ENCODE measurements at regions of chr6 and their contacts with region 1.

Region 1: DNA sequence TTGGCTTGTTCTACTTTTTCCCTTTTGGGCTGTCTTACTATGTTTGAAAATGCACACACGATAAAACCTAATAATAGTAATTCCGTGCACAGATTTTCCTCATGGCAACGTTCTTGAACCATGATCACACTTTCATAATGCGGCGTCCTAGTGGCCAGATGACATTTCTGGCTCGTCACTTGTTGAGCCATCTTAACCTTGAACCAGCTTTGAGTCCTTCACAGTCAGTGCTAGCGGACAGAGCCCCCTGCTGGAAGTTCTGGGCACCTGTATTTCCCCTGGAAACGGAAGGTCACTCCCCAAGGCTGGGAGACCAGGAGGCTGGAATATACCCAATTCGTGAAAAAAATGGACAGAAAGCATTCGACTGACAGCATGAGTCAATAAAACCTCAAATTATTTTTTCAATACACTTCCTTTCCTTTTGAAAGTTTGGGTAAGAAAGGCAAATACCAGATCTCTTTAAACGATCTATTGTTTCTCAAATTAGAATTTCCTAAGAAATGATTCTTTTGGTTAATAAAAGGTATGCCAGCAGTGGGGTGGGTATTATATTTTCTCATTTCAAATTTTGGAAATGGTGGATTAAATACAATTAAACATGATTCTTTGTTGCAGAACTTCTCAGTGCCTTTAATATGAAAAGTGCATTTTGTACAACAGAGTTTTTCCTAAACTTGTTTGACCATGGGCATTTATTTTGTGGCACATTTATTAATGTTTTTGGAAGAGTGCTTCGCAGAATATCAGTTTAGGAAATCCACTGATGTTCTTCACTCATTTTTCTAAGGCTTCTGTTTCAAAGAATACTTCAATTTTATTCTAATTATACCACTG is 542.3 kb downstream of the QKI start:
- DNase-seq: peak; percentile 68
- H3K4me3 ChIP-seq: no peak overlapping the region
- H3K27ac ChIP-seq: no peak overlapping the region
- H3K4me1 ChIP-seq: peaks cover 4% of the 10 kb centered on the region
- H3K27me3 ChIP-seq: peaks cover 0 to 8% of the 10 kb centered on the region in 2 experiments
- CTCF ChIP-seq: peak; percentile 81 to 91
- POLR2A ChIP-seq: no peak

Region 2: GRCh38 chr6:162907876-162908481 is 1048.8 kb before region 1 on chr6:
- CTCF ChIA-PET with region 1: no interaction called
- POLR2A ChIA-PET with region 1: no interaction called
- dilution Hi-C with region 1: no loop called
- intact Hi-C with region 1: loop called (anchors 5 kb)
- DNase-seq: peak; percentile 22
- H3K4me3 ChIP-seq: no peak overlapping the region
- H3K27ac ChIP-seq: no peak overlapping the region
- H3K4me1 ChIP-seq: no peaks in the 10 kb centered on the region
- H3K27me3 ChIP-seq: no peaks in the 10 kb centered on the region
- CTCF ChIP-seq: no peak
- POLR2A ChIP-seq: no peak

Region 3: DNA sequence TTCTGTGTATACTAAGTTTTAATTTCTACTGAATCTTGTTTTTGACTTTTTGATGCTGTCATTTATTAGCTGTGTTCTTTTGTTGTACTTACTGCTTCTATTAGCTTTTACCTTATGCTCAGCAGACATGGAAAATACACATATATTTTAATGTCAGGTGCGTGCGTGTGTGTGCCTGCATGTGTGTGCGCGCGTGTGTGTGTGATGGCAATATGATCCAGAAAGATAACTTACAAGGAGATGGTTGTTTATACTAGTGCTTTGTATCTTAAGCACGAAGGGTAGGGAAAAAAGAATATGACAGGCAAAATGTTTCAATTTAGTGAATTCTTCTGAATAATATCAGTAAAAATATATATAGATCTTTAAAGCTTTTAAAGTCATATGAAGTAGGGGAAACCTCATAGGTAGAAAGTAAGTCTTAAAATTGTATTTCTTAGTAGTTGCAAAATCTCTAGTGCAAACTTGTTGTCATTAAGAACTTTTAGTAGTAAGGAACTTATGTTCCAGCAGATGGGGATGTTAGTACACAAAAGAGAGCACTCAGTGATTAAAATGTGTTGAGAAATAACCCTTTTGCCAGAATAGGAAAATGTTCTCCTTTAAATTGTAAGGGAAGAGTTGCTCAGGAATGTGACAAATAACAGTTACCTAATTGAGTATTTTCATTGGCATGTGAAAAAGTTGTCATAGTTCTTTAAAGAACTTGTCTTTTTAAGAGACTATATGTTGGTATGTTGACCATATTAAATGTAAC is 529.1 kb before region 1 on chr6:
- CTCF ChIA-PET with region 1: interaction called, 15 read pairs
- POLR2A ChIA-PET with region 1: no interaction called
- dilution Hi-C with region 1: no loop called
- intact Hi-C with region 1: no loop called
- DNase-seq: peak; percentile 87
- H3K4me3 ChIP-seq: no peak overlapping the region
- H3K27ac ChIP-seq: no peak overlapping the region
- H3K4me1 ChIP-seq: peaks cover 32% of the 10 kb centered on the region
- H3K27me3 ChIP-seq: no peaks in the 10 kb centered on the region
- CTCF ChIP-seq: peak in 1 of 2 donors; percentile 7
- POLR2A ChIP-seq: no peak

Region 4: DNA sequence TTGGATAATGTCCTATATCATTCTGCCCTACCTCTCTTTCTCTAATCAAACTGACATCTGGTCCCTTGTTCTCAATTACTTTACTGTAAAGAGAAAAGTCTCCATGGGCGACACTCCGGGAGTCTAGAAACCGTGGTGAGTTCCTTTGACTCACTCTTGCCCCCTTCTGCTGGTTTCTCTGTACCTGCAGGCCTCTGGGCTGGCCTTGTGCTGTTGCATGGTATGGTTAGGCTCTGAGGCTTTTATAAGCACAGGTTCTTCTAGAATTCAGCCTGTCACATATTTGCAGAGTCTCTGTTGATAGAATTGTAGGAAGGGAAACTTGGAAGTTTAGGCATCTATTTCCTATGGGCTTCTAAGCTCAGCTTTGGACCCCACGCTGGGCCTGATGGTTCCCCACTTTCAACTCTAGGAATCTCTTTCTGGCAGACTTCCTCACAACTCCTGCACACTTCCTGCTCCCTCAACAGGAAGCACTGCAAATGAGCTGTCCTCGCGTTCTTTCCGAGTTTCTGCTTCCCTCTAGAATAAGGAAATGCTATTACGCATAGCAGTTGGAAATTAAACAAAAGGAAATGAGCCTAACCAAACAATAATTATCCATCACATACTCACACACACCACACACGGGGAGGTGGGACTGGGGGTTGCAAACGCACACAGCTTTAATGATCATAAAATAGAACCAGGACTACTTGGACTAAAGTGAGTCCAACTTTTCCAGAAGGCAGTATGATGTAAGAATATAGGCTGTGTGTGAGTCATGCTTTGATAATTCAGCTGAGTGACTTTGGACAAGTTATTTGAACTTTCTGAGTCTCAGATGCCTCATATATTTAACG is 141.0 kb after region 1 on chr6:
- CTCF ChIA-PET with region 1: interaction called, 4 read pairs
- POLR2A ChIA-PET with region 1: no interaction called
- dilution Hi-C with region 1: no loop called
- intact Hi-C with region 1: loop called (anchors 1 kb)
- DNase-seq: peak; percentile 94
- H3K4me3 ChIP-seq: no peak overlapping the region
- H3K27ac ChIP-seq: peak overlapping the region; percentile 59
- H3K4me1 ChIP-seq: peaks cover 23% of the 10 kb centered on the region
- H3K27me3 ChIP-seq: no peaks in the 10 kb centered on the region
- CTCF ChIP-seq: peak; percentile 22 to 51
- POLR2A ChIP-seq: no peak

Region 5: DNA sequence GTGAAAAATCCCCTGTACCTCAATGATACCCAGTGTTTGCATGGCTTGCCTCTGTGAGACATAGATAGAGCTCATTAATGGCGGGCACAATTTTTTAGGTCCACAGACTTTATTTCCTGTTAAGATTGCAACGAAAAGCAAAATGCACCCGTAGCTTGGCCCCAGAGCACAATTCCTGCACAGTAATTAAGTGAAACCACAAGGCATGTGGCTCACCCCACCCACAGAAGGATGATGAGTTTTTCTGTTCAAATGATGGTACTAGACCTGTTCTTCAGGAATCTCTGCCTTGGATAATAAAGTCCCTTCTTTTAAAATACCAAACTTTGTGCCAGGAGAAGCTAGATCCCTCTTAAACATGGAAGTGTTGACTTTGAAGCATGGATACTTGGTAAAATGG is 195.8 kb after region 1 on chr6:
- CTCF ChIA-PET with region 1: no interaction called
- POLR2A ChIA-PET with region 1: no interaction called
- dilution Hi-C with region 1: no loop called
- intact Hi-C with region 1: no loop called
- DNase-seq: no peak
- H3K4me3 ChIP-seq: no peak overlapping the region
- H3K27ac ChIP-seq: no peak overlapping the region
- H3K4me1 ChIP-seq: no peaks in the 10 kb centered on the region
- H3K27me3 ChIP-seq: no peaks in the 10 kb centered on the region
- CTCF ChIP-seq: no peak
- POLR2A ChIP-seq: no peak

Region 6: DNA sequence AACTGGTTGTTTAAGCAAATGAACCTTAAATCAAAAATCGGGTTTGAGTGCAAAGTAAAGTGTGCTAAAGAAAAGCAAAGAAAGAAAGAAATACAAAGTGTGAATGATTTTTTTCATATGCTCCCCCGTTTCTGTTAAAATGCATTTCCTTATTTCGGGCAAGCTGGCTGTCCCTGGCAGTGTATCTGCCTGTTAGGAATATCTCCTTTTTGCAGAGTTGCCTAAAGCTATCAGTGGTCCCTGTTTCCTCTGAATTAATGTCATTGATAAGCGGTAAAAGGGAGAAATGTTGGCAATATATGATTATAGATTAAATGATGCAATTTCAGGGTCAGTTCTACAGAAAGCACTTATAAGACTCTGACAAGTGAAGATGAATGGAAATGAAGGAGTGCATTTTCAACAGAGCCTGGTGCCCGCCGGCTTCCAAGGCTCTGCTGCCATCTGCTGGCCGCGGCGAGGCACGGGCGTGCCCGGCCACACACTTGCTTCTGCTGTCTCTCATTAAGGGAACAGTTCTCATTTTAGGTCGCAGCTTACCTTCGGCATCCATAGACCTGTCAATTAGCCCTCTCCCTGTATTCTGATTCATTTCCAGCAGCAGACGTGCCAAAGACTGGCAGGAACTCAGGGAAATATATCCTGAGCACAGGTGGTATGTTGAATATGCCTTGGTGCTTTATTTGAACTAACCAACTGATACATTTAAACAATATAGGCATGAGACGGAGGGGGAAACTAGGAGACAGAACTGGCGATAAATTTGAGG is 970.7 kb after region 1 on chr6:
- CTCF ChIA-PET with region 1: interaction called, 3 read pairs
- POLR2A ChIA-PET with region 1: no interaction called
- dilution Hi-C with region 1: no loop called
- intact Hi-C with region 1: loop called (anchors 1 kb)
- DNase-seq: peak; percentile 53
- H3K4me3 ChIP-seq: no peak overlapping the region
- H3K27ac ChIP-seq: no peak overlapping the region
- H3K4me1 ChIP-seq: no peaks in the 10 kb centered on the region
- H3K27me3 ChIP-seq: no peaks in the 10 kb centered on the region
- CTCF ChIP-seq: peak; percentile 87 to 95
- POLR2A ChIP-seq: no peak

Measured in endothelial cell of umbilical vein (primary cell).